ENCODE measurements at regions of chr15 and their contacts with region 1.

Region 1: GRCh38 chr15:59656897-59657634 is at the start of gene GTF2A2:
- DNase-seq: peak; percentile 97 to 98
- ATAC-seq: peak; percentile 99
- H3K4me3 ChIP-seq: peak within 1 kb of the TSS; percentile 75 to 95
- H3K27ac ChIP-seq: peak within 1 kb of the TSS in 1 of 2 donors; percentile 84
- H3K4me1 ChIP-seq: peaks cover 2 to 12% of the 10 kb centered on the region in 2 donors
- H3K27me3 ChIP-seq: no peaks in the 10 kb centered on the region
- total RNA-seq, gene GTF2A2: 63.5 to 79.3 TPM

Region 2: DNA sequence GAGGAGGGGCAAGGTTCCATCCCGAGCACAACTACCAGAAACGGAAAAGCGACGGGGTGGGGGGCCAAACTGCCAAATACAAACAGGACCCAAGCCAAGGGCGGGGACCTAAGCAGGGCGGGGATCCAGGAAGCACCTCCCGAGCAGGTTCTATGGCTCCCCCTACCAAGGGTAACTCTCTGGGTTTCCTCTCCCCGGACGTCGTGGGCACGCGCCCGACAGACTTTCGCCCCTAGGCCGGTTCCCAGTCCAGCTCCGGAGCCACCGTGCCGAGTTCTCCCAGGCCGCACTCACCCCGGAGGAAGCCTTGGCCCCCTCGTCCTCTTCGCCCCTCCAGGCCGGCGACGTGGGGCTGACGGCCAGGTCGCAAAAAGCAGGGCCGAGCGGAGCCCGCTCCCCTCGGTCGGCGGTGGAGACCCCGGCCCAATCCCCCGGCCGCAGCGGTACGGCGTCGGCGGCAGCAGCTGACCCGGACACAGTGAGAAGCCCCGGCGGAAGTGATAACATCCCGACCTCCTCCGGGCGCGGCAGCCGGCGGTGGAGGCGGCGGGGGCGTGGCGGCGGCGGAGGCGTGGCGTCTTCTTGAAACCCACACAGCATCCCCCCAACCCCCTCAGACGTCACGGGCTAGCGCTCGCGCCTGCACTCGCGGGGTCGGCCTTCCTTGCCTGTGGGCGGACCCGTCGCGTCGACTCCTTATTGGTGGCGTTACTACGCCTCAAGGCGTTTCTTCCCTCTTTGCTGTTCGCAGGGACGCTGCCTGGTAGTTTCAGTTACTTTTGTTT is 32.0 kb after region 1 on chr15 and contains the start of gene BNIP2:
- intact Hi-C with region 1: loop called in 1 of 2 experiments (anchors 2 kb)
- DNase-seq: peak; percentile 100
- ATAC-seq: peak; percentile 99
- H3K4me3 ChIP-seq: peak within 1 kb of the TSS; percentile 77 to 80
- H3K27ac ChIP-seq: peak within 1 kb of the TSS; percentile 81 to 92
- H3K4me1 ChIP-seq: no peaks in the 10 kb centered on the region
- H3K27me3 ChIP-seq: no peaks in the 10 kb centered on the region
- total RNA-seq, gene BNIP2: 85.8 to 90.5 TPM